ENCODE measurements at regions of chr6 and their contacts with region 1.

Region 1: GRCh38 chr6:157021344-157021992 is 244.3 kb downstream of the ARID1B start:
- DNase-seq: peak; percentile 97
- H3K4me3 Mint-ChIP-seq: peak overlapping the region; percentile 92
- H3K27ac Mint-ChIP-seq: peak overlapping the region; percentile 100
- H3K4me1 Mint-ChIP-seq: peaks cover 38% of the 10 kb centered on the region
- H3K27me3 Mint-ChIP-seq: no peaks in the 10 kb centered on the region

Region 2: GRCh38 chr6:156686995-156687788 is 334.3 kb before region 1 on chr6:
- intact Hi-C with region 1: loop called (anchors 1 kb)
- DNase-seq: peak; percentile 94
- H3K4me3 Mint-ChIP-seq: peak overlapping the region; percentile 89
- H3K27ac Mint-ChIP-seq: peak overlapping the region; percentile 94
- H3K4me1 Mint-ChIP-seq: peaks cover 20% of the 10 kb centered on the region
- H3K27me3 Mint-ChIP-seq: peaks cover 11% of the 10 kb centered on the region

Region 3: GRCh38 chr6:156957931-156958547 is 63.4 kb before region 1 on chr6:
- intact Hi-C with region 1: loop called (anchors 5 kb)
- DNase-seq: no peak
- H3K4me3 Mint-ChIP-seq: no peak overlapping the region
- H3K27ac Mint-ChIP-seq: peak overlapping the region; percentile 72
- H3K4me1 Mint-ChIP-seq: peaks cover 34% of the 10 kb centered on the region
- H3K27me3 Mint-ChIP-seq: no peaks in the 10 kb centered on the region

Region 4: GRCh38 chr6:157054531-157054979 is 33.1 kb after region 1 on chr6:
- intact Hi-C with region 1: loop called (anchors 1 kb)
- DNase-seq: peak; percentile 83
- H3K4me3 Mint-ChIP-seq: peak overlapping the region; percentile 71
- H3K27ac Mint-ChIP-seq: peak overlapping the region; percentile 94
- H3K4me1 Mint-ChIP-seq: peaks cover 29% of the 10 kb centered on the region
- H3K27me3 Mint-ChIP-seq: no peaks in the 10 kb centered on the region

Region 5: GRCh38 chr6:157274471-157275226 is 253.2 kb after region 1 on chr6:
- intact Hi-C with region 1: loop called (anchors 1 kb)
- DNase-seq: peak; percentile 96
- H3K4me3 Mint-ChIP-seq: peak overlapping the region; percentile 85
- H3K27ac Mint-ChIP-seq: peak overlapping the region; percentile 86
- H3K4me1 Mint-ChIP-seq: peaks cover 7% of the 10 kb centered on the region
- H3K27me3 Mint-ChIP-seq: peaks cover 9% of the 10 kb centered on the region

Measured in activated CD4-positive, alpha-beta T cell treated with anti-CD3 and anti-CD28 coated beads, Interleukin-2, amount 10 ng/mL, durations not matched to agents 24 days and 14 days (primary cell).